PC-3 (cell line): ENCODE measurements at regions of chr1 and their contacts with region 1.

Region 1: DNA sequence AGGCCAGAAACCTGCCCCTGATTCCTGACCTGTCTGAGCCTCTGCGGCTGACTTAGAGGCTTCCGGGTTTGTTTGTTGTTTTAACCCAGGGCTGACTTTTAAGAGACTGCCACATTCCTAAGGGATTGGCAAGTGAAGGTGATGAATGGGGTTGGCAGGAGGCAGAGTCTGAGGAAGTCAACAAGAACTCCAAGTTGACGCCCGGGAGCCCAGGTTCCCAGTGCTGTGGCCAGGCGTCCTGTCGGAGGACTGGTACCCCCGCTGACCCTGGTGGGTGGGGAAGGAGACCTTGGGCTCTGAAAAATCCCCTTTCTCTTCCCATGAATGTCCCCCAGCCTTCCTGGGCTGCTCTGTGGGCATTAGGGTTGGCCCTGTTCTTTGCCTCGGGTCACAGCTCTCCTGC is 19.7 kb upstream of the EPS8L3 start:
- DNase-seq: peak; percentile 90
- ATAC-seq: peak; percentile 77
- H3K4me3 ChIP-seq: no peak overlapping the region
- H3K27ac ChIP-seq: peak overlapping the region; percentile 38; the same call in 1 of the 2 replicates
- H3K4me1 ChIP-seq: peaks cover 48% of the 10 kb centered on the region
- H3K27me3 ChIP-seq: no peaks in the 10 kb centered on the region
- CTCF ChIP-seq: no peak

Region 2: GRCh38 chr1:109828756-109829505 is 45.5 kb after region 1 on chr1:
- CTCF ChIA-PET with region 1: no interaction called
- POLR2A ChIA-PET with region 1: no interaction called
- intact Hi-C with region 1: loop called (anchors 2 kb)
- DNase-seq: peak; percentile 46
- ATAC-seq: peak; percentile 40; the same call in 1 of the 2 replicates
- H3K4me3 ChIP-seq: no peak overlapping the region
- H3K27ac ChIP-seq: no peak overlapping the region
- H3K4me1 ChIP-seq: peaks cover 35% of the 10 kb centered on the region
- H3K27me3 ChIP-seq: no peaks in the 10 kb centered on the region
- CTCF ChIP-seq: no peak

Region 3: DNA sequence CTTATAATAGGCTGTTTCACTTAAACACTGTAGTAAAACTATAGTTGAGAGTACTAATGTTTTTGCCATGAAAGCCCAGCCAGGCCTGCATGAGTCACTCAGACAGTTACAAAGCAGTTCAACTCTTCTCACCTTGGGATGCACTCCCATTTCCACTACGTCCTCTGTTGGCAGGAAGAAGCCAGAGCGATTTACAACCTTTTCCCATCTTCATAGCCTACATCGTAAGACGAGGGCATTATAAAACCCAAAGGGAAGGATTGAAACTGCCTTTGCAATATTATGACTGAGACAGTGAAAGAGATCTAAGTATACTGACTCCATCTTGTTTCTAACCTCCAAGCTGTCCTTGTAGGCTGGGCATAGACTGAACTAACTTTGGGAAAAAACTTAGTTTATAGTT is 55.4 kb after region 1 on chr1:
- CTCF ChIA-PET with region 1: no interaction called
- POLR2A ChIA-PET with region 1: no interaction called
- intact Hi-C with region 1: loop called (anchors 2 kb)
- DNase-seq: peak; percentile 66
- ATAC-seq: peak; percentile 94
- H3K4me3 ChIP-seq: no peak overlapping the region
- H3K27ac ChIP-seq: peak overlapping the region; percentile 51
- H3K4me1 ChIP-seq: peaks cover 17% of the 10 kb centered on the region
- H3K27me3 ChIP-seq: no peaks in the 10 kb centered on the region
- CTCF ChIP-seq: peak; percentile 38; the same call in 1 of the 2 replicates

Region 4: DNA sequence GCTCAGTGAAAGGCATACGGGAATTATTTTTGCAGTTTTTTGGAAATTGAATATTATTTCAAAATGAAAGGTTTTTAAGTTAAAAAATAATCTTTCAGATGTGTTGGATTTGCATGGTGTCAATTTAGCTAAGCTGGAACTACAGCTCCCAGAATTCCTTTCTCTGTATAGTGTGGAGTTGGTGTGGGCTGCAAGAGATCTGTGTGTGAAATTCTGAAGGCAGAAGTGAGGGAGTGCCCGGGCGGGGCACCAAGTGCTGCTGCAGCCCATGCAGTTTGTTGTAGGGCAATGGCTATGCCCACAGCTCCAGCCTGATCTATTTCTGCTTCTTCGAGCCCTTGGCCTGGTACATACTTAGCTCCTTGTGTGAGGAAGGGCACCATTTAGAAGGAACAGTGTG is 66.8 kb after region 1 on chr1:
- CTCF ChIA-PET with region 1: no interaction called
- POLR2A ChIA-PET with region 1: no interaction called
- intact Hi-C with region 1: loop called (anchors 2 kb)
- DNase-seq: peak; percentile 21
- ATAC-seq: peak; percentile 65
- H3K4me3 ChIP-seq: no peak overlapping the region
- H3K27ac ChIP-seq: peak overlapping the region; percentile 33
- H3K4me1 ChIP-seq: peaks cover 21% of the 10 kb centered on the region
- H3K27me3 ChIP-seq: no peaks in the 10 kb centered on the region
- CTCF ChIP-seq: no peak

Region 5: GRCh38 chr1:109877320-109877771 is 93.9 kb after region 1 on chr1:
- CTCF ChIA-PET with region 1: no interaction called
- POLR2A ChIA-PET with region 1: no interaction called
- intact Hi-C with region 1: no loop called
- DNase-seq: no peak
- ATAC-seq: peak; percentile 46; the same call in 1 of the 2 replicates
- H3K4me3 ChIP-seq: no peak overlapping the region
- H3K27ac ChIP-seq: no peak overlapping the region
- H3K4me1 ChIP-seq: 0 out of 2 replicates have a peak, but pooled peaks cover 2% of the 10 kb centered on the region
- H3K27me3 ChIP-seq: no peaks in the 10 kb centered on the region
- CTCF ChIP-seq: no peak